ENCODE measurements at regions of chr1 and their contacts with region 1.

Region 1: GRCh38 chr1:163321311-163322305 is at the start of gene NUF2:
- ATAC-seq: peak; percentile 97 to 100 (median 99)
- H3K4me3 ChIP-seq: peak within 1 kb of the TSS; percentile 55 to 75 (median 62)
- H3K27ac ChIP-seq: peak within 1 kb of the TSS; percentile 52 to 56
- H3K4me1 ChIP-seq: peaks cover 4 to 5% of the 10 kb centered on the region in 2 donors
- total RNA-seq, gene NUF2: 0.93 to 70.7 (median 4.4) TPM in 7 of 8 experiments, not detected in the other

Region 2: GRCh38 chr1:162854245-162854882 is 467.2 kb before region 1 on chr1:
- in situ Hi-C with region 1: loop called in 6 of 9 experiments (anchors 25 kb)
- ATAC-seq: peak; percentile 48 to 97 (median 68)
- H3K4me3 ChIP-seq: no peak overlapping the region
- H3K27ac ChIP-seq: no peak overlapping the region
- H3K4me1 ChIP-seq: no peaks in the 10 kb centered on the region

Region 3: DNA sequence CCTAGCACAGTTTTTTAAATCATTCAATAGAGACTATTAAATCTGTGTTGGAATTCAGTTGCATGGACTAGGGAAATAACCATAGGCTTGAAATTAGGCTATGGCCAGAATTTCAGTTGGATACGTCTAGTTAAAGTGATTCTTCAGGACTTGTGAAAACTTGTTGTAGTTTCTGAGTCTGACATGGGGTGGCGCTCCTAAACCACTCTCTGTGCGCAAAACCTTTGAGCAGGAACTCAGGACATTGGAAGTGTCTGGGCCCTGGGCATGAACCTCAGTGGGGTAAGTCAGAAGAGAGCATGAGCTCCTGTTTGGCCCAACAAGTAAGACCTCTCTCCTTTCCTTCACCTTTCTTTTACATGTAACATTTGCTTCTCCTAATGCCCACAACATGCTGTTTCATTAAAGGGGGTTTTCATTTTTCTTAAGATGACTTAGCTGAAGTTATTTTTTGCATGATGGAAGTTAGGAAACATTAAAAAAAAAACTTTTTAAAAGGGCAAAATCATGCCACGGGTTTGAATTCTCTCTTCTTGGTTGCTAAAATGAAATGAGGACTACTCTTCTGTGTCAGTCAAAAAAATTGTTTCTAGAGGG is 443.5 kb before region 1 on chr1:
- in situ Hi-C with region 1: loop called in 7 of 9 experiments (anchors 25 kb)
- ATAC-seq: peak; percentile 29 to 78 (median 58)
- H3K4me3 ChIP-seq: no peak overlapping the region
- H3K27ac ChIP-seq: no peak overlapping the region
- H3K4me1 ChIP-seq: peaks cover 0 to 7% of the 10 kb centered on the region in 2 donors

Region 4: DNA sequence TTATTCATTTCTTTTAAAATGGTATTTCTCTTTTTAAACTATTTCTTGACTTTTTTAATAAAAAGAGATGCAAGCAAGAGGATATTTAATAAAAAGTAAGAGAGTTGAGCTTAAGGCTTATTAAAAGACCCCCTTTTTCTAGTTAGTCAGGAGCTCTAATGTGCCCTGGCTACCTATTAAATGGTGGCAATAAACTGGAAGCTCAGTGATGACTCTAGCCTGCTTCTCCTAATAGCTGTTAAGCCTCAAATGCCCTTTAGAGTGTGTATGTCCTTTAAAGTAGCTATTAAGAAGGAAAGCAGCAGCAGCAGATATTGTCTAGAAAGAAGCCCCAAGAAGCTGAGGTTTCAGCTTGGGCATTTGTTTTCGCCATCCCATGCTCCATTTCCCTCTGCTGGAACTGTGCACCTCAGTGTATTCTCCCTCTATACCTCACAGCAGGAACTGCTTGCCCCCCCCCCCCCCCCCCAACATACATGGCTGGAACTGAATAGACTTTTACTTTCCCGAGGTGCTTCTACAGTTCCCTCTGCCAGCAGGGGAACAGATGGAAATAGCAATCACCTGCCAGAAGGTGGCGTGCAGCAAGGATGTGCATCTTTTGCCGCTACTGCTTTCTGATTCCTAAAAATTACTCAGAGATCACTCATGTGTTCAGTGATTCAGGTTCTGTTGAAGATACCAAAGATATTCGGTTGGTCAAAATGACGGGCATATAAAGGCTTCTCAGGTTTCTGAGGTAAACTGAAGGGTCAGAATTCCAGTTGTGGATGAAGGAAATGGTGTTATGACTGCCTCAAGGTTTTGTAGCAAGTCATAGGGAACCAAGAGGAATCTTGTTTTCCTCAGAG is 250.0 kb before region 1 on chr1:
- in situ Hi-C with region 1: loop called in 2 of 9 experiments (anchors 25 kb)
- ATAC-seq: peak in 6 of 8 experiments; percentile 10 to 72 (median 20)
- H3K4me3 ChIP-seq: peak overlapping the region in 3 of 5 donors; percentile 7 to 28 (median 27)
- H3K27ac ChIP-seq: no peak overlapping the region
- H3K4me1 ChIP-seq: peaks cover 4 to 20% of the 10 kb centered on the region in 2 donors

Region 5: GRCh38 chr1:163085041-163085903 is 236.3 kb before region 1 on chr1:
- in situ Hi-C with region 1: loop called in 1 of 9 experiments (anchors 25 kb)
- ATAC-seq: peak in 2 of 8 experiments; percentile 17 to 52
- H3K4me3 ChIP-seq: no peak overlapping the region
- H3K27ac ChIP-seq: no peak overlapping the region
- H3K4me1 ChIP-seq: peaks cover 0 to 3% of the 10 kb centered on the region in 2 donors

Measured in motor neuron (in vitro differentiated cells).